ENCODE measurements at regions of chr2 and their contacts with region 1.

Region 1: GRCh38 chr2:67840460-67841068 is 222.2 kb downstream of the C1D start:
- DNase-seq: peak; percentile 61
- H3K4me3 ChIP-seq: no peak overlapping the region
- H3K27ac ChIP-seq: no peak overlapping the region
- H3K4me1 ChIP-seq: no peaks in the 10 kb centered on the region
- H3K27me3 ChIP-seq: no peaks in the 10 kb centered on the region
- CTCF ChIP-seq: peak; percentile 63 to 90 (median 78)
- POLR2A ChIP-seq: no peak

Region 2: DNA sequence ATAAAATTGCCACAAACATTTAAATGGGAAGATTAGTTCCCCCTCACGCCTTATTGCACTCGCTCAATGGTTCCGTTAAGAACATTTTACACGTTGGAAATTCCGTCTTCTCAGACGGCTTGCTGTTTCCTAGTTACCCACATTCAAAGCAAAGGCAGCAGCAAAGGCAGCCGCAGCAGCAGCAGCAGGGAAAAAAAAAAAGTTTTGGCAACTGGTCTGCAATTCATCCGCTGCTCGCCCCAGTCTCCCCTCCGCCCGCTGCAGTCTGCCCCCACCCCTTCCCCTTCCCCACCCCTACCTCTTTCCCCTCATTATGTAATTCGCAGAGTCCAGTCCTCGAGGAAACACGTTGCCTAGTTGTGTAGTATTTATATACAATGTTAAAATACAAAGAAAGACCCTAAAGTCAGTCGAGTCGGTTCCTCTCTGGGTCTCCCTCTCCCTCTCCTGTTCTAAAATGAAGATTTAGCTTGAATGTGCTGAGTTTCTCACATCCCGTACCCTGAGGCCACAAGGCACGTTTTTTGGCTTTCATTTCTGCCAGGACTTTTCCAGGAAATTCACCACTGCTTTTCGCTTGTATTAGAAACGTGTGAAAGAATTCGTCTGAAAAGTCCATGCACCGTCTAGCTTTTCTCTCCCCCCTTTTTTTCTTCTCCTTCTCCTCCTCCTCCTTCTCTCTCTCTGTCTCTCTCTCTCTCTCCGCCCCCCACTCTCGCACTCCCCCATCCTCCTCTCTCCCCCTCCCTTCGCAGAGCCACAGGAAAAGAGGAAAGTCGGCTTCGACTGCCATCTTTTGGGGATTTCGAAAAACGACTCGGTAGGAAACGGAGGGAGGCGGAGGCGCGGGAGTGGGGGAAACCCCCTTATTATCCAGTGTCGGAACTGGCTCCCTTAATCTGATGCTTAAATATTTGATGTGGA is 1265.6 kb before region 1 on chr2:
- intact Hi-C with region 1: loop called (anchors 5 kb)
- DNase-seq: peak; percentile 63
- H3K4me3 ChIP-seq: peak overlapping the region; percentile 36 to 39
- H3K27ac ChIP-seq: peak overlapping the region; percentile 79 to 89
- H3K4me1 ChIP-seq: peaks cover 7% of the 10 kb centered on the region
- H3K27me3 ChIP-seq: peaks cover 13% of the 10 kb centered on the region
- CTCF ChIP-seq: peak in 2 of 4 experiments; percentile 46 to 52
- POLR2A ChIP-seq: no peak

Region 3: GRCh38 chr2:66897181-66897580 is 943.4 kb before region 1 on chr2:
- intact Hi-C with region 1: loop called (anchors 10 kb)
- DNase-seq: no peak
- H3K4me3 ChIP-seq: no peak overlapping the region
- H3K27ac ChIP-seq: peak overlapping the region in 1 of 2 donors; percentile 10
- H3K4me1 ChIP-seq: no peaks in the 10 kb centered on the region
- H3K27me3 ChIP-seq: no peaks in the 10 kb centered on the region
- CTCF ChIP-seq: no peak
- POLR2A ChIP-seq: no peak

Region 4: DNA sequence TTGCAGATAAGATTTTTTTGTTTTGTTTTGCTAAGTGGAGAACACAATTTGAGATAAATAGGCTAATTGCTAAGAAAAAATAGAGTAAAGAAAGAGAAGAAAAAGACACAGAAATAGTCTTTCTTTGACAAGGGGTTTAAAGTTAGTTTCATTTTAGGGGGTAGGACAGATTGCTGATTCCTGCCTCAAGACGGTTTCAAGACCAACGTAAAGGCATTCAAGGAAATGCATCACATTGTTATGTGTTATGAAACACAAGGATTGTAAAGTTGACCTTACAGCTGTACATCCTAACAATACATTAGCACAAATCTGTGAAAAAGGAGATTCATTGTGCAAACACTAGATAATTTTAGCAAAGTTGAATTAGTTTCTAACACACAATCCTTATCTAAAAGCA is 466.1 kb before region 1 on chr2:
- intact Hi-C with region 1: no loop called
- DNase-seq: no peak
- H3K4me3 ChIP-seq: no peak overlapping the region
- H3K27ac ChIP-seq: no peak overlapping the region
- H3K4me1 ChIP-seq: no peaks in the 10 kb centered on the region
- H3K27me3 ChIP-seq: no peaks in the 10 kb centered on the region
- CTCF ChIP-seq: no peak
- POLR2A ChIP-seq: no peak

Region 5: DNA sequence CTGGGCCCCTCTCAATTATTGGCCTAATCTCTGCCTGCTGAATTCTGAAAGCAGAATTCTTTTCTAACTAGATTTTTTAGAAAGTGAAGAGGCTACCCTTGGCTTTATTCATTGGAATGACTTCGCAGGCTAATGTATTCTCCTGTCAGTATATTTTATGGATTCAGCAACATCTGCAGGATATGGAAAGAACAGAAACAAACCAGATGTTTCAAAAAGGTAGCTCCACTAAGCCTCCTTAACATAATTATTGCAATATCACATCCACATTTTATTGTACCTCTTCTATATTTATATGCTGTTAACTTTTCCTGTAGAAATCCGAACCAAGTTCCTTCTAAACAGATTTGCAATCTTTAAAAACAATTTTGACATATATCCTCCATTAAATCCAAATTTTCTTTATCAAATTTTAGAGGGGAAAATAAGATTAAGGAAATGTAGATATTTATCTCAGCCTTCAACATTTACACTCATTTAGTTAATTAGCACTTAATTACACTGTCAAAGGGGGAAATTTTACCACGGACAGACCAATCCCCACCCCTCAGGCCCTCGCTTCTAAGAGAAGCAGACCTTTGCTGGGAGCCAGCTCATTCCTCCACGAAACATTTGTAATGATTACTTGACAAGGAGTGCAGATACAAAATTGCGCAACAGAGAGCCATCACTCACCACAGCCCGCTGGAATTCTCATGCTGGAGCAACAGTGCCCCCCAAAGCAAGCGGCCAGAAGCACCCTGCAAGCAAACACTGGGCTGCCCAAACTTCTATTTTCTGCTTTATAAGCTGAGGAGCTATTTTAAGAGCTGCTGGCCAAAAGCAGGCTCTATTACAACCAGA is 190.1 kb before region 1 on chr2:
- intact Hi-C with region 1: loop called (anchors 5 kb)
- DNase-seq: peak; percentile 54
- H3K4me3 ChIP-seq: no peak overlapping the region
- H3K27ac ChIP-seq: no peak overlapping the region
- H3K4me1 ChIP-seq: no peaks in the 10 kb centered on the region
- H3K27me3 ChIP-seq: no peaks in the 10 kb centered on the region
- CTCF ChIP-seq: peak in 3 of 4 experiments; percentile 39 to 69 (median 58)
- POLR2A ChIP-seq: no peak

Region 6: GRCh38 chr2:67782443-67782842 is 58.1 kb before region 1 on chr2:
- intact Hi-C with region 1: no loop called
- DNase-seq: no peak
- H3K4me3 ChIP-seq: no peak overlapping the region
- H3K27ac ChIP-seq: peak overlapping the region in 1 of 2 donors; percentile 38
- H3K4me1 ChIP-seq: no peaks in the 10 kb centered on the region
- H3K27me3 ChIP-seq: no peaks in the 10 kb centered on the region
- CTCF ChIP-seq: no peak
- POLR2A ChIP-seq: no peak

Measured in prostate gland (tissue), 2 donors.